CD4-positive, alpha-beta memory T cell (primary cell): ENCODE measurements at regions of chr9 and their contacts with region 1.

Region 1: GRCh38 chr9:96418074-96418809 is at the start of gene ZNF367:
- DNase-seq: peak; percentile 90 to 92 (median 92)
- H3K4me3 ChIP-seq: peak within 1 kb of the TSS; percentile 86 to 89
- H3K4me3 Mint-ChIP-seq: peak within 1 kb of the TSS; percentile 90 to 98 (median 92)
- H3K27ac ChIP-seq: peak within 1 kb of the TSS; percentile 81
- H3K27ac Mint-ChIP-seq: peak within 1 kb of the TSS; percentile 92 to 99 (median 97)
- H3K4me1 ChIP-seq: peaks cover 49% of the 10 kb centered on the region
- H3K4me1 Mint-ChIP-seq: peaks cover 24 to 49% (median 32%) of the 10 kb centered on the region in 4 donors
- H3K27me3 ChIP-seq: no peaks in the 10 kb centered on the region
- H3K27me3 Mint-ChIP-seq: no peaks in the 10 kb centered on the region
- total RNA-seq, gene ZNF367: 5.1 to 5.4 TPM

Region 2: GRCh38 chr9:95510709-95511615 is 907.3 kb before region 1 on chr9:
- CTCF ChIA-PET with region 1: no interaction called
- POLR2A ChIA-PET with region 1: no interaction called
- intact Hi-C with region 1: loop called (anchors 5 kb)
- DNase-seq: peak; percentile 80 to 83 (median 81)
- H3K4me3 ChIP-seq: peak overlapping the region; percentile 42 to 46
- H3K4me3 Mint-ChIP-seq: peak overlapping the region; percentile 89 to 99 (median 94)
- H3K27ac ChIP-seq: peak overlapping the region; percentile 4
- H3K27ac Mint-ChIP-seq: peak overlapping the region; percentile 87 to 96 (median 94)
- H3K4me1 ChIP-seq: peaks cover 40% of the 10 kb centered on the region
- H3K4me1 Mint-ChIP-seq: peaks cover 21 to 73% (median 31%) of the 10 kb centered on the region in 4 donors
- H3K27me3 ChIP-seq: peaks cover 4% of the 10 kb centered on the region
- H3K27me3 Mint-ChIP-seq: peaks cover 7 to 13% of the 10 kb centered on the region in 2 donors

Region 3: DNA sequence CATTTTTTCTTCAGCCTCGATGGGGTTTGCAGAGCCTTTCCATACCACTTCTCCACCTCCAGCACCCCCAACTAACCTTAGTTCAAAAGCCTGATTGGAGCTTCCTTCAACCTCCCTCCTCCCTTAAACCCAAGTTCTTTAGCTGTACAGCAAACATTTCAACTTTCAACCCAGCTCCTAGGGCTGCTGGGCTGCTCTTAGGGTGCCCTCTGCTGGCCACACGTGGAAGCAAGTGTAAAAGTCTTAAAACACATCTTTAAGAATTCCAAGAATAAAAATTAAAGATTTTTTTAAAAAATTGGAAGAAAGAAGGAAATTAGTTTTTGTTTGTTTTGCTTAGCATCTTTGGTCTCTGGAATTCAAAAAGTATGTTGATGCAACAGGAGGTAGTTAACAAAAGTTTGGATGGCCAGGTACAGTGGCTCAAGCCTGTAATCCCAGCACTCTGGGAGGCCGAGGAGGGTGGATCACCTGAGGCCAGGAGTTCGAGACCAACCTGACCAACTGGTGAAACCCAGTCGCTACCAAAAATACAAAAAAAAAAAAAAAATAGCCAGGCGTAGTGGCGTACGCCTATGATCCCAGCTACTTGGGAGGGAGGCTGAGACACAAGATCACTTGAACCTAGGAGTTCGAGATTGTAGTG is 100.8 kb before region 1 on chr9:
- CTCF ChIA-PET with region 1: no interaction called
- POLR2A ChIA-PET with region 1: no interaction called
- intact Hi-C with region 1: no loop called
- DNase-seq: peak in 4 of 5 donors; percentile 24 to 40 (median 30)
- H3K4me3 ChIP-seq: no peak overlapping the region
- H3K4me3 Mint-ChIP-seq: no peak overlapping the region
- H3K27ac ChIP-seq: no peak overlapping the region
- H3K27ac Mint-ChIP-seq: peak overlapping the region in 2 of 7 donors; percentile 5 to 76
- H3K4me1 ChIP-seq: no peaks in the 10 kb centered on the region
- H3K4me1 Mint-ChIP-seq: peaks cover 0 to 2% (median 0%) of the 10 kb centered on the region in 4 donors
- H3K27me3 ChIP-seq: no peaks in the 10 kb centered on the region
- H3K27me3 Mint-ChIP-seq: peaks cover 0 to 2% of the 10 kb centered on the region in 2 donors

Region 4: DNA sequence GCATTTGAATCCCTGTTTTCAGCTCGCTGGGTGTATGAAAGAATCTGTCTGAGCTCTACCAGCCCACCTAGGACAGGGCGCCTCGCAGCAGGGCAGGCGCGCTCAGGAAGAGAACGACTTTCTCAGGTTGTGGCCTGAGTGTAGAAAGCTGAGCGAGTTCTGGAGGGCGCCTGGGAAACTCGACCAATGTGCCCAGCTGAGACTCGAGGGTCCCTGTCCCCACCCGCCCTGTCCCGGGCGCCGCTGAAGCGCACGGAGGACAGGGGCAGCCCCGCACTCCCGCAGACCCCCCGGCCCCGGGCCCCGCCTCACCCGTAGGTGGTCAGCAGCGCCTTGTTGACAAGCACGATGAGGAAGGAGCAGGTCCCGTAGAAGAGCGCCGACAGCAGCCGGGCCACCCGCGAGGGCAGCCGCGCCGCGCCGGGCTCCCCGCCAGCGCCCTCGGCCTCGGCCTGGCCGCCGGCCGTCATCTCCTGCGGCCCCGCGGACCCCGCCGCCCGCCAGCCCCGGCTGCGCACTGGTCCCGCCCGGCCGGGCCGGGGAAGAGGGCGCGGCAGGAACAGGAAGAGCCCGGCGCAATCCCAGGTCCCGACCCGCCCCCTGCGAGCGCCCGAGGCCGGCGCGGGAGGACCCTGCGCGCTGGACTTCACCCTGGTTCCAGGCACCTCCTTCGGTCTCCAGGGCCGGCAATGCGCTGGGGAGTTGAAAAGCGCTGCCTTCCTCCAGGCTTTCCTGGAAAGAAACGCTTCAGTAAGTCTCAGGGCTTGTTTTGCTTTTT is 34.9 kb before region 1 on chr9 and contains the start of gene SLC35D2:
- CTCF ChIA-PET with region 1: interaction called, 6 read pairs
- POLR2A ChIA-PET with region 1: interaction called, 14 read pairs
- intact Hi-C with region 1: loop called (anchors 2 kb)
- DNase-seq: peak in 2 of 5 donors; percentile 12 to 13
- H3K4me3 ChIP-seq: peak within 1 kb of the TSS; percentile 61 to 71
- H3K4me3 Mint-ChIP-seq: peak within 1 kb of the TSS; percentile 84 to 94 (median 90)
- H3K27ac ChIP-seq: peak within 1 kb of the TSS; percentile 65
- H3K27ac Mint-ChIP-seq: peak within 1 kb of the TSS; percentile 81 to 94 (median 87)
- H3K4me1 ChIP-seq: peaks cover 27% of the 10 kb centered on the region
- H3K4me1 Mint-ChIP-seq: peaks cover 27 to 49% (median 35%) of the 10 kb centered on the region in 4 donors
- H3K27me3 ChIP-seq: no peaks in the 10 kb centered on the region
- H3K27me3 Mint-ChIP-seq: no peaks in the 10 kb centered on the region
- total RNA-seq, gene SLC35D2: 29.8 to 30.3 TPM

Region 5: GRCh38 chr9:96441798-96442445 is 23.7 kb after region 1 on chr9:
- CTCF ChIA-PET with region 1: no interaction called
- POLR2A ChIA-PET with region 1: interaction called, 14 read pairs
- intact Hi-C with region 1: no loop called
- DNase-seq: peak in 1 of 5 donors; percentile 19
- H3K4me3 ChIP-seq: no peak overlapping the region
- H3K4me3 Mint-ChIP-seq: no peak overlapping the region
- H3K27ac ChIP-seq: no peak overlapping the region
- H3K27ac Mint-ChIP-seq: no peak overlapping the region
- H3K4me1 ChIP-seq: no peaks in the 10 kb centered on the region
- H3K4me1 Mint-ChIP-seq: no peaks in the 10 kb centered on the region
- H3K27me3 ChIP-seq: no peaks in the 10 kb centered on the region
- H3K27me3 Mint-ChIP-seq: no peaks in the 10 kb centered on the region

Region 6: GRCh38 chr9:96566498-96567207 is 148.4 kb after region 1 on chr9:
- CTCF ChIA-PET with region 1: interaction called, 3 read pairs
- POLR2A ChIA-PET with region 1: interaction called, 11 read pairs
- intact Hi-C with region 1: loop called (anchors 1 kb)
- DNase-seq: peak; percentile 79 to 88 (median 80)
- H3K4me3 ChIP-seq: peak overlapping the region; percentile 75 to 80
- H3K4me3 Mint-ChIP-seq: peak overlapping the region; percentile 88 to 93 (median 91)
- H3K27ac ChIP-seq: peak overlapping the region; percentile 80
- H3K27ac Mint-ChIP-seq: peak overlapping the region; percentile 73 to 90 (median 82)
- H3K4me1 ChIP-seq: peaks cover 18% of the 10 kb centered on the region
- H3K4me1 Mint-ChIP-seq: peaks cover 15 to 30% (median 23%) of the 10 kb centered on the region in 4 donors
- H3K27me3 ChIP-seq: no peaks in the 10 kb centered on the region
- H3K27me3 Mint-ChIP-seq: no peaks in the 10 kb centered on the region

Region 7: DNA sequence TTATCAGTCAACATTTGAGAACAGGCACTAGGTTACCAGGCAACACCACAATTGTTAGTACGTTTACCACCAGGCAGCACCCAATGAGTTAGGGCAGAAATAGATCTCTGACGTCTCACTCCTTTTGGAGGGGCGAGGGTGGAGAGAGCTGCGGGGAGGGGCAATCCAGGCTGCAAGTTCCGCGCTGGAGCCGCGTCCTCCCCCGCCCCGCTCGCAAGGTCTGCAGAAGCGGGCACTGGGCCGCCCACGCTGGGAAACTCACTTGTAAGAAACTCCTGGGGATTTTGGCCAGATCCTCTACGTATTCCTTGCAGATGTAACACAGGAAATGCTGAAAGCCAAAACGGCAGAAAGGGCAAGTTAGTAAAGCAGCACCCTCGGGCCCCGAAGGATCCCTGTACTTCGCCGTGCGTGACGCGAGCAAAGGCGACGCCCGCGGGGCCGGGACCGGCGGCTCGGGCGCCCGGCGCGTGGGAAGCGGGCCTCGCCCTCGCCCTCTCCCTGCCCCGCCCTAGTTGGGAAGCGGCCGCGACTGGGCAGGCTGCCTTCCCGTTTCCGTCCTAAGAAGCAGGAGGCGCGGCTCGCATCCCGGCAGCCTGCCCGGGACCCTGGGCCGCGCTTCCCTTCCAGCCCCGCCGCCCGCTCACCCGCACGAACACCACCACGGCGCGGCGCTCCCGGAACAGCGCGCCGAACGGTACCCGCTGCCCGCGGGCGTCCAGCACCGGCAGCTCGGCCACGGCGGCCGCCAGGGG is 236.4 kb after region 1 on chr9:
- CTCF ChIA-PET with region 1: no interaction called
- POLR2A ChIA-PET with region 1: no interaction called
- intact Hi-C with region 1: loop called (anchors 1 kb)
- DNase-seq: peak; percentile 85 to 95 (median 91)
- H3K4me3 ChIP-seq: peak overlapping the region in 1 of 2 donors; percentile 70
- H3K4me3 Mint-ChIP-seq: peak overlapping the region; percentile 90 to 98 (median 94)
- H3K27ac ChIP-seq: peak overlapping the region; percentile 86
- H3K27ac Mint-ChIP-seq: peak overlapping the region; percentile 98 to 99 (median 99)
- H3K4me1 ChIP-seq: peaks cover 18% of the 10 kb centered on the region
- H3K4me1 Mint-ChIP-seq: peaks cover 18 to 34% (median 26%) of the 10 kb centered on the region in 4 donors
- H3K27me3 ChIP-seq: no peaks in the 10 kb centered on the region
- H3K27me3 Mint-ChIP-seq: peaks cover 0 to 2% of the 10 kb centered on the region in 2 donors

Region 8: GRCh38 chr9:97632985-97633858 is 1215.0 kb after region 1 on chr9 and contains the starts of genes NCBP1 and TSTD2:
- CTCF ChIA-PET with region 1: no interaction called
- POLR2A ChIA-PET with region 1: no interaction called
- intact Hi-C with region 1: loop called (anchors 2 kb)
- DNase-seq: peak; percentile 96 to 97 (median 97)
- H3K4me3 ChIP-seq: peak within 1 kb of the TSS; percentile 80 to 87
- H3K4me3 Mint-ChIP-seq: peak within 1 kb of the TSS; percentile 96 to 100 (median 98)
- H3K27ac ChIP-seq: peak within 1 kb of the TSS; percentile 92
- H3K27ac Mint-ChIP-seq: peak within 1 kb of the TSS; percentile 96 to 100 (median 100)
- H3K4me1 ChIP-seq: peaks cover 52% of the 10 kb centered on the region
- H3K4me1 Mint-ChIP-seq: peaks cover 37 to 65% (median 51%) of the 10 kb centered on the region in 4 donors
- H3K27me3 ChIP-seq: no peaks in the 10 kb centered on the region
- H3K27me3 Mint-ChIP-seq: no peaks in the 10 kb centered on the region
- total RNA-seq, gene NCBP1: 40.7 to 50.8 TPM
- total RNA-seq, gene TSTD2: 17.8 to 18.4 TPM